Activated CD4-positive, alpha-beta memory T cell treated with anti-CD3 and anti-CD28 coated beads for 36 hours (primary cell): ENCODE measurements at regions of chr11 and their contacts with region 1.

Region 1: DNA sequence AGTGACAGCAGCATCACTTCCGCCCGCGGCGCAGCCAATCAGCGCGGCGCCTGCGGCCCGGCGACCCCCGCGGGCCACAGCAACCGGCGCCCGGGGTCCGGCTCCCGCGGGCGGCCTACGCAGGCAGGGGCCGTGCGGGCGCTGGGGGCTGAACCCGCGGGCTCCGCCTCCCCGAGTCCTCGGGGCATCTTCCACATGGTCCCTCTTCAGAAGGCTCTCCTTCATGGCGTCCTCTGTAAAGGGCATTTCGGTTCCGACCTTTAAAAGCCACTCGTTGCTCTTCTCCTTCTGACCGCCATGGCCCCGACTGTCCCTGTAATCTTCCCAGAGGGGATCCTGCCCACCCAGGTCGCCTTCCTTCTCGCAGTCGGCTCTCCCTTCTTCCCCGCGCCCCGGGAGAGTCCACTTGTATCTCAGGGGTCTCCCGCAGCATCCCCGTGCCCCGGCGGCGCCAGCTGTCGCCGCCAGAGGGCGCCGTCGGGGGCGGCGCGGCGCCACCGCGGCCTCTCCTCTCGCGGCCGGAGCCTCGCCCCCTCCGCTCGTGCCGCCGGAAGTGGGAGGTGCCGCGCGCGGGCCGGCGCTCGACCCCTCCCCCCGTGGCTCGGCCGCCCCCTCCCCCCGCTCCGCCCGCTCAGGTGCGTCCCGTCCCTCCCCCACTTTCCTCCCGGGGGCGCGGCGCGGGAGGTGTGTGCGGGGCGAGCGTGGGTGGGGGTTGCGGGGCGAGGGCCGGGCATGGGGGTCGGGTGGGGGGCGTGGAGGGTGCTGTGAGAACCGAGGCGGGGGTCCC is at the start of gene RNF214:
- DNase-seq: peak; percentile 83
- H3K4me3 Mint-ChIP-seq: peak within 1 kb of the TSS; percentile 99
- H3K27ac Mint-ChIP-seq: peak within 1 kb of the TSS; percentile 98
- H3K4me1 Mint-ChIP-seq: peaks cover 37% of the 10 kb centered on the region
- H3K27me3 Mint-ChIP-seq: no peaks in the 10 kb centered on the region
- total RNA-seq, gene RNF214: 16.9 to 18.3 TPM

Region 2: DNA sequence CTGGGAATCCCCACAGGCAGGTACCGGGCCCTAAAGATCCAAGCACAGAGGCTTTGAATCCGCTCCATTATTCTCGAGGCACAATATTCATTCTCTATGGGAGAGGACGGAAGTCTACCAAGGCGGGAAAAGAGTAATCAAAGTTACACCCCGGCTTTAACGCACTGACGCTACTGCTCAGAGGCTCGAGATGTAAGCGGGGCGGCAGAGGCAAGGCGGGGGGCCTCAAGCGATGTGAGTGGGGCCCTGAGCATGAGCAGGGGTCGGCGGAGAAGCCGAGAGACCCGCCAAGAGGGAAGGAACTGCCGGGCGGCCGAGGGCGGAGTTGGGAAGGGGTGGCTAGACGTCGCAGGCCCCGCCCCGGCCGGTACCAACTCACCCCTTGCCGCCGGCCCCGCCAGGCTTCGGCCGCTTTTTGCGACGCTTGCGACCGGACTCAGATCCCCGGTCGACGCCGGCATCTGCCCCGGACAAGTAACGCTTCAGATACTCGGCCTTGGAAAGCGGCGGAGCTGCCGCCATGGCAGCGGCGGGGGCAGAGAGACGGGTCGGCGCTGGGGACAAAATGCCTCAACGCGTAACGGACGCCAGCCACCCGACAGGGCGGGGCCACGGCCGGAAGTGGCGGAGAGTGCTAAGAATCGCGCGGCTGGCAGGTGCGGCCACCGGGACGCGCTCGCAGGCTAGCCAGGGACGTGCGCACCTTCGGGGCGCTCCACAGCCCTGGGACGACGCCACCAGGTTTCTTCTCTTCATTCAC is 459.7 kb before region 1 on chr11 and contains the start of gene BUD13:
- CTCF ChIA-PET with region 1: no interaction called
- POLR2A ChIA-PET with region 1: interaction called, 3 read pairs
- intact Hi-C with region 1: loop called (anchors 5 kb)
- DNase-seq: peak; percentile 96
- H3K4me3 Mint-ChIP-seq: peak within 1 kb of the TSS; percentile 99
- H3K27ac Mint-ChIP-seq: peak within 1 kb of the TSS; percentile 95
- H3K4me1 Mint-ChIP-seq: peaks cover 55% of the 10 kb centered on the region
- H3K27me3 Mint-ChIP-seq: no peaks in the 10 kb centered on the region
- total RNA-seq, gene BUD13: 30.3 to 32.7 TPM

Region 3: DNA sequence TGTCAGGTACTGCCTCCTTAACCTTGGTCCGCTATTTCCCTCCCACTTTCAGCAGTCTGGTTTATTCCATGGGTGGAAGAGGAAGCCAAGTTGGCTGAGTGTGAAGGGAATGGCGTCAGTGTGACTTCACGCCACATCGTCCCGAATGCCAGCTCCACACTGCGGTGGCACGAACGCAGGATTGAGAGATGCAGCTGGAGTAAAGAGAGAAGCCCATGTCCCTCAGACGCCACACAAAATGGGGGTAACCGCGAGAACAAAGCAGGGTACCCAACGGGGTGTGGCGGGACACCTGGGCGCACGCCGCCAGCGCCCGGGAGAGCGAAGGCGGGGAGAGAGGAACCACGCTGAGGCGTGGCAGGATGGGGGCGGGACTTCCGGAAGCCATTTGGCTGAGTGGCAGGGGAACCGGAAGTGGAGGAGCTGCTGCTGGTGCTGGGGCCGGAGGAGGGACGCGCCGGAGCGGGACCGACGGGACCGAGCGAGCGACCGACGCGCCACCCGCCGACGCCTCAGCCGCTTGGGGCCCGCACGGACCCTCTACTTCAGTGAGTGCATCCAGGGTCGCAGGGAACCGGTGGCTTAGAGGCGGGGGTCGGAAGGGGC is 88.3 kb before region 1 on chr11 and contains the start of gene PAFAH1B2:
- CTCF ChIA-PET with region 1: interaction called, 5 read pairs
- POLR2A ChIA-PET with region 1: interaction called, 8 read pairs
- intact Hi-C with region 1: loop called (anchors 1 kb)
- DNase-seq: peak; percentile 97
- H3K4me3 Mint-ChIP-seq: peak within 1 kb of the TSS; percentile 96
- H3K27ac Mint-ChIP-seq: peak within 1 kb of the TSS; percentile 90
- H3K4me1 Mint-ChIP-seq: peaks cover 37% of the 10 kb centered on the region
- H3K27me3 Mint-ChIP-seq: no peaks in the 10 kb centered on the region
- total RNA-seq, gene PAFAH1B2: 61.3 to 61.5 TPM

Region 4: GRCh38 chr11:117178210-117179034 is 53.9 kb before region 1 on chr11 and contains the start of gene SIDT2:
- CTCF ChIA-PET with region 1: interaction called, 61 read pairs
- POLR2A ChIA-PET with region 1: interaction called, 22 read pairs
- intact Hi-C with region 1: loop called (anchors 1 kb)
- DNase-seq: peak; percentile 94
- H3K4me3 Mint-ChIP-seq: peak within 1 kb of the TSS; percentile 92
- H3K27ac Mint-ChIP-seq: peak within 1 kb of the TSS; percentile 79
- H3K4me1 Mint-ChIP-seq: peaks cover 29% of the 10 kb centered on the region
- H3K27me3 Mint-ChIP-seq: no peaks in the 10 kb centered on the region
- total RNA-seq, gene SIDT2: 21.5 to 26.0 TPM

Region 5: GRCh38 chr11:117327567-117328374 is 95.5 kb after region 1 on chr11 and contains the start of gene CEP164:
- CTCF ChIA-PET with region 1: interaction called, 14 read pairs
- POLR2A ChIA-PET with region 1: interaction called, 17 read pairs
- intact Hi-C with region 1: loop called (anchors 1 kb)
- DNase-seq: peak; percentile 97
- H3K4me3 Mint-ChIP-seq: peak within 1 kb of the TSS; percentile 53
- H3K27ac Mint-ChIP-seq: no peak within 1 kb of the TSS
- H3K4me1 Mint-ChIP-seq: peaks cover 5% of the 10 kb centered on the region
- H3K27me3 Mint-ChIP-seq: no peaks in the 10 kb centered on the region
- total RNA-seq, gene CEP164: 29.3 to 32.6 TPM

Region 6: GRCh38 chr11:117458275-117458674 is 226.0 kb after region 1 on chr11:
- CTCF ChIA-PET with region 1: no interaction called
- POLR2A ChIA-PET with region 1: no interaction called
- intact Hi-C with region 1: loop called (anchors 5 kb)
- DNase-seq: peak; percentile 84
- H3K4me3 Mint-ChIP-seq: peak overlapping the region; percentile 30
- H3K27ac Mint-ChIP-seq: peak overlapping the region; percentile 66
- H3K4me1 Mint-ChIP-seq: peaks cover 31% of the 10 kb centered on the region
- H3K27me3 Mint-ChIP-seq: peaks cover 10% of the 10 kb centered on the region

Region 7: DNA sequence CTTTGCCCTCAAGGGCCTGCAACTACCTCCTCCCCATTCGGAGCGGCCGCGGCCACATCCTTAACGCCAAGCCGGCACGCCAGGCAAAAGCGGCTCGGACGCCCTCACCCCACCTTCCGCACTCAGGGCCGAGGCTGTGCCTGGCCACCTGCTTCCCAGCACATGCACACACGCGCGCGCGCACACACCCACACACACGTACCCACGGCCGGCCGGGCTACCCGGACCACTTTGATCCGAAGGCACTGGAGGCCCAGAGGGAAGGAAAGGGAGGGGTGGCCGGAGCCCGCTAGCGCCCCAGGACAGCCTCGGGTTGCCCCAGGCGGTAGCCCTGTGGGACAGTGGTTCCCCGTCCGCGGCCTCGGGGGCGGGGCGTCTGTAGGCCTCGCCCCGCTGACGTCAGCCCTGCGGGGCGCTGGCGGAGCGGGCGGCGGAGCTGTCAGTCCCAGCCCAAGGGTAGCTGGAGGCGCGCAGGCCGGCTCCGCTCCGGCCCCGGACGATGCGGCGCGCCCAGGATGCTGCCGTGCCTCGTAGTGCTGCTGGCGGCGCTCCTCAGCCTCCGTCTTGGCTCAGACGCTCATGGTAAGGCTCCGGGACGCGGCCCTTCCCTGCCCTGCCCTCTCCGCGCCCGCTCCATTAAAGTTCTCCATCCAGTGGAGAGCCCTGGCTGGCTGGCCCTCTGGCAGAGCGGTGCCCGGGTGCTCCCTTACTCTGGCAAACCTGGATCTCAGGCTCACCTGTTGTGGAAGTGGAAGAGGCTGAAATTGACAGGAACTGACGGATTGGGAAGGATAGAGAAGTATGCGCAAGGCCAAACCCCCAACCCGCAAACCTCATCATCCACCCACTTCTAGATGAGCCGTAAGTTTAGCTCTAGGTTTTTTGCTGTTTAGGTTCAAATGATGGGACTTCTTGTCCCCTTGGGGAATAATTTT is 753.9 kb after region 1 on chr11 and contains the start of gene IL10RA:
- CTCF ChIA-PET with region 1: no interaction called
- POLR2A ChIA-PET with region 1: no interaction called
- intact Hi-C with region 1: loop called (anchors 5 kb)
- DNase-seq: peak; percentile 91
- H3K4me3 Mint-ChIP-seq: peak within 1 kb of the TSS; percentile 82
- H3K27ac Mint-ChIP-seq: peak within 1 kb of the TSS; percentile 97
- H3K4me1 Mint-ChIP-seq: peaks cover 69% of the 10 kb centered on the region
- H3K27me3 Mint-ChIP-seq: no peaks in the 10 kb centered on the region
- total RNA-seq, gene IL10RA: 114 to 117 TPM